Tibial artery (tissue), 4 donors: ENCODE measurements at regions of chr3 and their contacts with region 1.

Region 1: DNA sequence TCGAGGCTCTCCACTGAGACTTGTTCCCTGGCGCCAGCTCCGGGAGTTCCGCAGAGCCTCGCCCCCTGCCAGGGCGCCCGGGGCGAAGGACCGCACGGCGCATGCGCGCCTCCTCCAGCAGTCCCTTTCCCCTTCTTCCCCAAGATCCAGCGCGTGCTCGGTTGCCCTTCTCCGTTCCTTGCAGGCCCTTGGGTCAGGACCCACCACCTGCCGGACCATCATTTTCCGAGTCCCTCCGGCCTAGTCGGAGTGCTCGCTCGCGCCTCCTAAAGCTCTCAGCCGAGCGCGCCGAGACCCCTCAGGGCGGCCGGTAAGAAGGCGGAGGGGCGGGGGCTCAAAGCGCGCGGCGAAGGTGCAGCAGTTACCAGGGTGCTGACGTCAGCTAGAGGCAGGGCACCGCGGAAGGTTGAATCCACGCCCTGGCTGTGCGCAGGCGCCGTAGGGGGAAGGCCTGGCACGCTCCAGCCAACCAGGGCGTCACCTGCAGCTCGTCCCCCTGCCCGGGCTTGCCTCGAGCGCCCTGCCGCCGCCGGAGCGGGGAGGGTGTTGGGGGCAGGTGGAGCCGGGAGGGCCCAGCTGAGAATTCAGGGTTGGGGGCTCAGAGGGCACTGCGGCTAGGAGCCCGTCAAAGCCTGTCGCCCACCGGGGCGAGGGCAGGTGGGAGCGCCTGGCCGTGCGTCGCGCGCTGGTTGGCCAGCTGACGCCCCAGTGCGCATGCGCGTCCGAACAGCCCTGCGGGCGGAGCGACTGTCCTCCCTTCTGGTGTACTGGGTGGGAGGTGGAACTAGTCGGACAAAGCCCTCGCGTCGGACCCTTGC is at the start of gene TCAIM:
- DNase-seq: peak; percentile 95 to 99
- H3K4me3 ChIP-seq: peak within 1 kb of the TSS; percentile 74 to 88
- H3K27ac ChIP-seq: peak within 1 kb of the TSS; percentile 94 to 98
- H3K4me1 ChIP-seq: peaks cover 0 to 44% (median 22%) of the 10 kb centered on the region in 4 donors
- H3K27me3 ChIP-seq: no peaks in the 10 kb centered on the region
- CTCF ChIP-seq: no peak

Region 2: DNA sequence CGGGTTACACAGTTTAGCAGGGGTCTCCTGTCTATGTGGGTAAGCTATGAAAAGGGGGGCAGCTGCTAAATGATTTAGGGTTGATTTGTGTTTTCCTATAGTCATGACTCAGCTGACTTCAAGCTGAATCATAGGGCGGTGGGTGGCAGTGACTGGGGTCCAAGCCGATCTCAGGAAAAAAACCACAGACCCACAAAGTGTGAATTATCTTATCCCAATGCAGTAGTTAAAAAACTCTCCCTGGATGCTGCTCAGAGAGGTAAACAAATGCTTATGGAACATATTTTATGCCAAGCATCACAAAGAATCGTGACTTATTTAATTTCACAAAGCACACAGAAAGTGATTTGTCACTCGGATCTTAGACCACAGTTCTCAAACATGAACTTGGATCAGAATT is 114.9 kb before region 1 on chr3:
- intact Hi-C with region 1: no loop called
- DNase-seq: no peak
- H3K4me3 ChIP-seq: no peak overlapping the region
- H3K27ac ChIP-seq: no peak overlapping the region
- H3K4me1 ChIP-seq: no peaks in the 10 kb centered on the region
- H3K27me3 ChIP-seq: peaks cover 0 to 8% of the 10 kb centered on the region in 2 donors
- CTCF ChIP-seq: no peak

Region 3: GRCh38 chr3:44439499-44440295 is 101.5 kb after region 1 on chr3:
- intact Hi-C with region 1: loop called (anchors 10 kb)
- DNase-seq: peak; percentile 81 to 89
- H3K4me3 ChIP-seq: peak overlapping the region; percentile 35 to 39
- H3K27ac ChIP-seq: peak overlapping the region; percentile 88 to 91
- H3K4me1 ChIP-seq: peaks cover 0 to 25% (median 11%) of the 10 kb centered on the region in 4 donors
- H3K27me3 ChIP-seq: no peaks in the 10 kb centered on the region
- CTCF ChIP-seq: no peak

Region 4: GRCh38 chr3:44510000-44510368 is 171.8 kb after region 1 on chr3:
- intact Hi-C with region 1: loop called (anchors 10 kb)
- DNase-seq: no peak
- H3K4me3 ChIP-seq: peak overlapping the region; percentile 64 to 95
- H3K27ac ChIP-seq: peak overlapping the region; percentile 81 to 98
- H3K4me1 ChIP-seq: peaks cover 0 to 24% (median 14%) of the 10 kb centered on the region in 4 donors
- H3K27me3 ChIP-seq: no peaks in the 10 kb centered on the region
- CTCF ChIP-seq: no peak